ENCODE measurements at regions of chr10 and their contacts with region 1.

Region 1: DNA sequence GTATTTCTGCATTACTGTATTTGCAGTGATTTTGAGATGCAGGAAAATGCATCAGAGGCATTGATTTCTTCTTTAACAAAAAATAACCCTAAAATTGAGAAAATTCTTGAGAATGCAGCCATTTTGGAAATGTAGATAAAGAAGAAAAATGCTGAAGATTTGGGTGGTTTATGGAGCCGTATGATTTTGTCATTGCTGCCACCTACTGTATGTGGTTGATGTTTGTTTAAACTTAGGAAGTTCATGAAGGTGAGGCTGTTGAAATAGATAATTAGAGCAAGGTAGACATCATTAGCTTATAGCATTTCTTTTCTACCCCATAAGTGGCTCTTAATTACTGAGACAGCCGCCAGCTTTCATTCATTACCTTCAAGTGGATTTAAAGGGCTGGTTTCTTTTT is 92.1 kb upstream of the SAMD8 start:
- DNase-seq: peak; percentile 51 to 73 (median 73)
- H3K4me3 ChIP-seq: no peak overlapping the region
- H3K27ac ChIP-seq: no peak overlapping the region
- H3K4me1 ChIP-seq: peaks cover 4 to 36% (median 30%) of the 10 kb centered on the region in 4 experiments
- H3K27me3 ChIP-seq: no peaks in the 10 kb centered on the region

Region 2: DNA sequence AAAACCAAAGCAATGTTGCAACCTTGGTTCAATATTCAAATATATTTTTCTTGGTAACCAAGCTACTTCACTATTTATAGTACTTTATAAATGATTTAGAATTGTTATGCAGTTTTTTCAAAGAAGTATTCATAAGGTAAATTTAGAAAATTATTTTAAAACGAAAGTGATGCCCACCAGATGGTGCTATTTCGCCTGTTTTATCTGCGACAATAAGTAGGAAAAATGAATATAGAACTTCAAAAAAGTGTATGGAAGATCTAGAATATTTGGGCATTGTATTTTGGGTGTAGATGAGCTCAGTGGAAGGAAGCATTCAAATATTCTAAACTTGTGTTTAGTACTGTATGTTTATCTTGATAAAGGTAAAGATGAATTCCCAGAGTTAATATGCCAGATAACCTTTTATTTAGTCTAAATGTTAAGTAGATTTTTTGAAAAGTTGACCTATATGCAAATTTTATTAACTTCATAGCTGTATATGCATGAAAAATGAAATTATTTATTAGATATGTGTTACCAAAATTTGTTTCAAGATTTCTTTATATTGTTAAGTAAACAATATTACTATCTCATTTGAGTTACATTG is 775.2 kb before region 1 on chr10:
- CTCF ChIA-PET with region 1: interaction called, 44 read pairs
- POLR2A ChIA-PET with region 1: no interaction called
- DNase-seq: peak; percentile 69 to 82 (median 77)
- H3K4me3 ChIP-seq: no peak overlapping the region
- H3K27ac ChIP-seq: no peak overlapping the region
- H3K4me1 ChIP-seq: peaks cover 0 to 5% (median 1%) of the 10 kb centered on the region in 4 experiments
- H3K27me3 ChIP-seq: no peaks in the 10 kb centered on the region

Region 3: GRCh38 chr10:74262856-74263255 is 756.5 kb before region 1 on chr10:
- CTCF ChIA-PET with region 1: interaction called, 25 read pairs
- POLR2A ChIA-PET with region 1: no interaction called
- DNase-seq: no peak
- H3K4me3 ChIP-seq: no peak overlapping the region
- H3K27ac ChIP-seq: no peak overlapping the region
- H3K4me1 ChIP-seq: peaks cover 0 to 3% (median 1%) of the 10 kb centered on the region in 4 experiments
- H3K27me3 ChIP-seq: no peaks in the 10 kb centered on the region

Region 4: GRCh38 chr10:74419958-74420375 is 599.4 kb before region 1 on chr10:
- CTCF ChIA-PET with region 1: interaction called, 14 read pairs
- POLR2A ChIA-PET with region 1: no interaction called
- DNase-seq: peak; percentile 37 to 67 (median 55)
- H3K4me3 ChIP-seq: no peak overlapping the region
- H3K27ac ChIP-seq: no peak overlapping the region
- H3K4me1 ChIP-seq: peaks cover 0 to 10% (median 6%) of the 10 kb centered on the region in 4 experiments
- H3K27me3 ChIP-seq: no peaks in the 10 kb centered on the region

Region 5: DNA sequence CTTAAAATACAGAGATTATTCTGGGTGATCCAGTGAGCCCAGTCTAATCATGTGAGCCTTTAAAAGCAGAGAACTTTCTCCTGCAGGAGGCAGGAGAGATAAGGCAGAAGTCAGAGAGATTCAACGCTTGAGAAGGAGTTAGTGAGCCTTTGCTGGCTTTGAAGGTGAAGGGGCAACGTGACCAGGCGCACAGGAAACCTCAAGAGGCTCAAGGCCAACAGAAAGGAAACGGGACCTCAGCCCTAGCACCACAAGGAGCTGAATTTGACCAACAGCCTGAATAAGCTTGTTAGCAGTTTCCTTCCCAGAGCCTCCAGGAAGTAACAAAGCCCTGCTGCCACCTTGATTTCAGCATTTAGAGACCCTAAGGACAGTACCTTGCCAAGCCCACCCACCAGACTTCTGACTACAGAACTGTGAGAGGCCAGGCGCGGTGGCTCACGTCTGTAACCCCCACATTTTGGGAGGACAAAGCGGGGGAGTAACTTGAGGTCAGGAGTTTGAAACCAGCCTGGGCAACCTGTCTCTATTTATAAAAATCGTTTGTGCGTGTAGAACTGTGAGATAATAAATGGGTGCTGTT is 280.3 kb before region 1 on chr10:
- CTCF ChIA-PET with region 1: interaction called, 49 read pairs
- POLR2A ChIA-PET with region 1: no interaction called
- DNase-seq: peak; percentile 88 to 97 (median 95)
- H3K4me3 ChIP-seq: peak overlapping the region in 6 of 7 experiments; percentile 23 to 53 (median 34)
- H3K27ac ChIP-seq: peak overlapping the region in 1 of 2 experiments; percentile 67
- H3K4me1 ChIP-seq: peaks cover 11 to 38% (median 33%) of the 10 kb centered on the region in 4 experiments
- H3K27me3 ChIP-seq: no peaks in the 10 kb centered on the region

Region 6: DNA sequence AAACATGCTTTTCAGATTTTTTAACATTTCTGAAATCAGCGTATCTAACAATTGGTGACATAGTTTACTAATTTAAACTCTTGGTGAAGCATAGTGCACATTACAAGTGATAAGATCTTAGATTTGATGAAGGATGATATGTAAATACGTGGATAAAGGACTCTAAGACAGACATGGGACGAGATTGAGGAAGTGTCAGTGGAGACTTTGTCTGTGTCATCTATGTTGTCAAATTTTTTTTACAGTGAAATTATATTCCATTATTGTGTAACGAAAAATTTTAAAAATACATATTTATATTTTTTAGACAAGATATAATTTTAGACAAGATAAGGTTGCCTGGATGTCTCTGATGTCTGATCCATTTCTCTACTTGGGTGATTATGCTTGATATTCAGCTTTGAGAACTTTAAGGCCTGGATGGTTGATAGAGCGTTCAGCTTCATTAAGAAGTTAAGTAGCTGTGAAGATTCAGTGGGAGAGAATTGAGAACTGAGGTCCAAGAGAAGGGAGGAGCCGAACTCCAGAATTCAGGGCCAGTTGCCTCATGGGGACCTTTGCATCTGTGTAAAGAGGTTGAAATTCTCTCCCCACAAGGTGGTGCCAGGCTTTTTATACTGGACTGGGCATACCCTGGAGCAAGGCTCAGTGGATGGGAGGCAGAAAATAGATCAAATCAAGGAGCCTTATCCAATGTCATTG is 130.3 kb before region 1 on chr10:
- CTCF ChIA-PET with region 1: interaction called, 12 read pairs
- POLR2A ChIA-PET with region 1: no interaction called
- DNase-seq: peak; percentile 25 to 42 (median 35)
- H3K4me3 ChIP-seq: no peak overlapping the region
- H3K27ac ChIP-seq: no peak overlapping the region
- H3K4me1 ChIP-seq: peaks cover 0 to 26% (median 8%) of the 10 kb centered on the region in 4 experiments
- H3K27me3 ChIP-seq: no peaks in the 10 kb centered on the region

Region 7: DNA sequence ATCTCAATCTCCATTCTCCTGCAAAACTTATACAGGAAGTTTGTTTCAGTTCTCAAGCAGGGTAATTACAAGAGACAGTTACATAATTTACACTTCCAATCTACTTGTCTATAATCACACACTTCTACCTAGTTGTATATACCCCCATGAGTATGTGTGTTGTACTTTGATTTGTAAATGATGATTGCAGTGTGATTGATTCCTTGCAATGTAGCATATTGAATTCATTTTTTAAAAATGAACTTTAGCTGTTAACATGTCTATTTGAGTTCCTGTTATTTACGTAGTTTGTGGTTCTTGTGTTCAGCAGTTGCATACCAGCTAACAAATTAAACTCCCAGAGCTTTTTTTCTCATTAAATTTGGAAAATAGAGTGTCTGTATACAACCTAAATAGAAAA is 10.4 kb before region 1 on chr10:
- CTCF ChIA-PET with region 1: interaction called, 10 read pairs
- POLR2A ChIA-PET with region 1: no interaction called
- DNase-seq: peak in 2 of 3 donors; percentile 40 to 61
- H3K4me3 ChIP-seq: peak overlapping the region in 3 of 7 experiments; percentile 1 to 78 (median 57)
- H3K27ac ChIP-seq: peak overlapping the region in 1 of 2 experiments; percentile 8
- H3K4me1 ChIP-seq: peaks cover 6 to 40% (median 22%) of the 10 kb centered on the region in 4 experiments
- H3K27me3 ChIP-seq: no peaks in the 10 kb centered on the region

Measured in common myeloid progenitor, CD34-positive (primary cell).